ENCODE measurements at regions of chrX and their contacts with region 1.

Region 1: GRCh38 chrX:106952988-106953387 is 32.8 kb downstream of the CLDN2 start:
- DNase-seq: no peak
- ATAC-seq: peak; percentile 66

Region 2: DNA sequence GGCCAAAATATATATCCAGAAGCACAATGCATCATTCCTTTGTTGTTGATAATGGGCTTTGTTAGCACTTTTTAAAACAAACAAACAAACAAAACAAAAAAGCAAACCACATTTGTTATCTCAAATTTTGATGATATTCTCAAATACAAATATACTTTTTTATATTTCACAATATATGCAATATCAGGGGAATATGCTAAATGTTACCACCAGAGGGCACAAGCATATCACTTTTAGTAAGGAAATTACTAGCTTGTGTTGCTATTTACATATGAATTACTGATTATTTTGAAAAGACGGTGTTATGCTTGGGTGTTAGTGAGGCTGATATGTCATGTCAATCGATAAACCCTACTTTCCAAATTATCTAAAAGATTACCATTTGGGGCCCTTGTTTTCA is 78.9 kb before region 1 on chrX:
- intact Hi-C with region 1: no loop called
- DNase-seq: no peak
- ATAC-seq: no peak

Region 3: DNA sequence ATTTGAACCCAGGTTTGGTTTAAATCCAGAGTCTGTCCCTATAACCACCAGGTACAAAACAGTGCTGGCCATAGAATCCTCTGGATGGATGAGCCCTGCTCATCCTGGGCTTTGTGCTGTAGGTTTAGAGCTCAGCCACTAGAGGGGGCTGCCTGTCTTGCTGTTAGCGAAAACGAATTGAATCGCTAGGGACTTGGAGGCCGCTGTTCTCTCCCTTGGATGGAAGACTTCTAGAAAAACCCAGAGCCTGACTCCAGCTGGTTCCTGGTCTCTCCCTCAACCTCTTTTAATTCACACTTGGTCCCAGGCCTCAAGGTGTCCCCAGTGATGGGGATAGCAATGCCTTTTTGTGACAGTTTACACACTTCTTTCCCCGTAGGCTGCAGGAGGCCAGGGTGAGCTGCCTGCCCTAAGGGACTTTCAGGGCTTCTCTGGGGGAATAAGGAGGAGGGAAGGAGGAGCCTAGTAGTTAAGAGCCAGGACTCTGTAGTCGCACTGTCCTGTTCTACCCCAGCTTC is 58.5 kb before region 1 on chrX:
- intact Hi-C with region 1: loop called in 1 of 2 experiments (anchors 5 kb)
- DNase-seq: peak; percentile 45 to 47
- ATAC-seq: peak; percentile 77